WTC11 (cell line): ENCODE measurements at regions of chr12 and their contacts with region 1.

Region 1: GRCh38 chr12:130013771-130014484 is 110.1 kb upstream of the TMEM132D start:
- DNase-seq: peak; percentile 68
- ATAC-seq: peak; percentile 89
- H3K4me3 Mint-ChIP-seq: no peak overlapping the region
- H3K27ac Mint-ChIP-seq: no peak overlapping the region
- H3K4me1 Mint-ChIP-seq: peaks cover 6% of the 10 kb centered on the region
- H3K27me3 Mint-ChIP-seq: peaks cover 9% of the 10 kb centered on the region
- CTCF ChIP-seq: peak; percentile 49

Region 2: GRCh38 chr12:129887117-129887516 is 126.8 kb before region 1 on chr12:
- CTCF ChIA-PET with region 1: no interaction called
- POLR2A ChIA-PET with region 1: no interaction called
- DNase-seq: no peak
- ATAC-seq: no peak
- H3K4me3 Mint-ChIP-seq: no peak overlapping the region
- H3K27ac Mint-ChIP-seq: no peak overlapping the region
- H3K4me1 Mint-ChIP-seq: no peaks in the 10 kb centered on the region
- H3K27me3 Mint-ChIP-seq: peaks cover 2% of the 10 kb centered on the region; the same call in 1 of the 2 replicates
- CTCF ChIP-seq: no peak

Region 3: GRCh38 chr12:129911428-129912049 is 102.4 kb before region 1 on chr12:
- CTCF ChIA-PET with region 1: interaction called, 22 read pairs
- POLR2A ChIA-PET with region 1: no interaction called
- DNase-seq: peak; percentile 24
- ATAC-seq: peak; percentile 78
- H3K4me3 Mint-ChIP-seq: no peak overlapping the region
- H3K27ac Mint-ChIP-seq: no peak overlapping the region
- H3K4me1 Mint-ChIP-seq: no peaks in the 10 kb centered on the region
- H3K27me3 Mint-ChIP-seq: peaks cover 37% of the 10 kb centered on the region
- CTCF ChIP-seq: peak; percentile 38; the same call in 1 of the 2 replicates

Region 4: GRCh38 chr12:129966146-129966995 is 47.6 kb before region 1 on chr12:
- CTCF ChIA-PET with region 1: interaction called, 25 read pairs
- POLR2A ChIA-PET with region 1: no interaction called
- DNase-seq: no peak
- ATAC-seq: peak; percentile 18; the same call in 1 of the 2 replicates
- H3K4me3 Mint-ChIP-seq: no peak overlapping the region
- H3K27ac Mint-ChIP-seq: no peak overlapping the region
- H3K4me1 Mint-ChIP-seq: peaks cover 5% of the 10 kb centered on the region
- H3K27me3 Mint-ChIP-seq: peaks cover 7% of the 10 kb centered on the region; the same call in 1 of the 2 replicates
- CTCF ChIP-seq: no peak

Region 5: DNA sequence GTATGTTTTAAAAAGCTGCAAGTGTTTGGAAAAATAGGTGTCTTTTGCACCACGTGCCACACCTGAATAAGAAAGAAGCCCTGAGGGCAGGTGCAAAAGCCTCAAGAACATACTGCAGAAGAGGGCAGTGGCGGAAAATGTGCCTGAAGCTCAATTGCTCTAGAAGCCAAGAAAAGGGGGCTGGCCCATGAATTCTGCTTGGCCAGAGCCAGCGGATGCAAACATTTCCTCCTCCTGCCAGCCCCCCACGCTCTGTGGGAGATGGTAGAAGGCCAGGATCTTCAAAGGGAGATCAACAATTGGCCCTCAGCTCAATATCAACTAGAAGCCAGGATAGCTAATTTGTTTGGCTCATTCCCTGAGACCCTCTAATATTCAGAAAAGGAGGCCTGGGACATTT is 29.8 kb before region 1 on chr12:
- CTCF ChIA-PET with region 1: interaction called, 14 read pairs
- POLR2A ChIA-PET with region 1: no interaction called
- DNase-seq: no peak
- ATAC-seq: peak; percentile 56
- H3K4me3 Mint-ChIP-seq: no peak overlapping the region
- H3K27ac Mint-ChIP-seq: no peak overlapping the region
- H3K4me1 Mint-ChIP-seq: peaks cover 15% of the 10 kb centered on the region
- H3K27me3 Mint-ChIP-seq: peaks cover 17% of the 10 kb centered on the region
- CTCF ChIP-seq: no peak

Region 6: GRCh38 chr12:130026608-130027176 is 12.8 kb after region 1 on chr12:
- CTCF ChIA-PET with region 1: interaction called, 32 read pairs
- POLR2A ChIA-PET with region 1: no interaction called
- DNase-seq: peak; percentile 33
- ATAC-seq: no peak
- H3K4me3 Mint-ChIP-seq: no peak overlapping the region
- H3K27ac Mint-ChIP-seq: no peak overlapping the region
- H3K4me1 Mint-ChIP-seq: no peaks in the 10 kb centered on the region
- H3K27me3 Mint-ChIP-seq: peaks cover 19% of the 10 kb centered on the region
- CTCF ChIP-seq: peak; percentile 25; the same call in 1 of the 2 replicates

Region 7: GRCh38 chr12:130121226-130122000 is 107.5 kb after region 1 on chr12:
- CTCF ChIA-PET with region 1: no interaction called
- POLR2A ChIA-PET with region 1: no interaction called
- DNase-seq: no peak
- ATAC-seq: no peak
- H3K4me3 Mint-ChIP-seq: no peak overlapping the region
- H3K27ac Mint-ChIP-seq: no peak overlapping the region
- H3K4me1 Mint-ChIP-seq: no peaks in the 10 kb centered on the region
- H3K27me3 Mint-ChIP-seq: peaks cover 17% of the 10 kb centered on the region
- CTCF ChIP-seq: no peak

Region 8: DNA sequence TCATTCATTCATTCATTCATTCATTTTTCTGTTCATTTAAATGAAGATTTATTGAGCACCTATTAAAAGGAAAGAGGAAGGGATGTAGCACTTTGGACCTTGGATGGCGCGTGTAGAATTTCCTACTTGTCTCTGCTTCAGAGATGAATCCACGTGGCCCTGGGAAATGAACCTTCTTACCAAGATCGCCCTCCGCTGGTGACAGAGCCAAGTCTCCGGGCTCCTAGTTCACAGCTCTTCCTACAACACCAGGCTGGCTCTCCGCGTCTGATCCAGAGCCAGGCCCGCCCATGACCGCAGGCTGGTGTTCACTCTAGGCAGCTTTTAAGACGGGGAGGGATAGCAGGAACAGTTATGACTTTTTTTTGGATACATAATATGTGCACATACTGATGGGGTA is 252.8 kb after region 1 on chr12:
- CTCF ChIA-PET with region 1: no interaction called
- POLR2A ChIA-PET with region 1: no interaction called
- DNase-seq: peak; percentile 41
- ATAC-seq: peak; percentile 61; the same call in 1 of the 2 replicates
- H3K4me3 Mint-ChIP-seq: no peak overlapping the region
- H3K27ac Mint-ChIP-seq: no peak overlapping the region
- H3K4me1 Mint-ChIP-seq: no peaks in the 10 kb centered on the region
- H3K27me3 Mint-ChIP-seq: peaks cover 11% of the 10 kb centered on the region
- CTCF ChIP-seq: no peak